Cardiac septum (tissue), 1 donor: ENCODE measurements at regions of chr2 and their contacts with region 1.

Region 1: GRCh38 chr2:215917953-215918620 is 95.3 kb downstream of the MREG start:
- DNase-seq: no peak

Region 2: DNA sequence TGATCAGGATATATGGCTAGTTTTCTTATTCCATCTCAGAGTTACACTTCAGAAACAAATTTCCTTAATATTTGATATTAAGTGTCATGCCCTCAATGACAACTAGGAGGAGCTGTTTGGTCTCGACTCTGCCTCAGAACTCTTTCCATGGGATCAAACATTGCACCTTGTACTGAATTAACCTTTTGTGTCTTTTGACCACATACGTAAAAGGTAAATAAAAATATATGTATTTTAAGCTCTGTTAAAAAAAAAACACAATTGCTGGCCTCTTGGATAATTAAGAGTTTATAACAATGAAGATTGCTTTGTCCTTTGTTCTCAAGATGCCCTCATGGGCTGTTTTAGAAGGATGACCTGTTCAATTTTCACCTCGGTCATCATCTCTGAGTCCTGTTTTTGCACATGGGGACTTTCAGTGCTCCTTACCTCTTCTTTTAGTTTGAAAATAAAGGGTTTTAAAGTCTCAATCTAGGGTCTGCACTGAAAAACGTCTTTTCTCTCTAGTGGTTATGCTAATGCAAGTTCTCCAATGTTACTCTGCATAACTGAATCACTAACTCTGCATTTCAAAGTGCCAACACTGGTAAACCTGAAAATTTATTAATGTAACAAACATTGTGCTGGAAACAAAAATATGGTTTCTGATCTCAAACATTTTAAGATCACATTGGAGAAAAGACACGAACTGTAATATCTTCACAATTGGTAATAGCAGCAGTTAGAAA is 463.4 kb before region 1 on chr2:
- intact Hi-C with region 1: loop called (anchors 5 kb)
- DNase-seq: no peak

Region 3: GRCh38 chr2:215843579-215843978 is 74.5 kb before region 1 on chr2:
- intact Hi-C with region 1: loop called (anchors 5 kb)
- DNase-seq: no peak